ENCODE measurements at regions of chr3 and their contacts with region 1.

Region 1: DNA sequence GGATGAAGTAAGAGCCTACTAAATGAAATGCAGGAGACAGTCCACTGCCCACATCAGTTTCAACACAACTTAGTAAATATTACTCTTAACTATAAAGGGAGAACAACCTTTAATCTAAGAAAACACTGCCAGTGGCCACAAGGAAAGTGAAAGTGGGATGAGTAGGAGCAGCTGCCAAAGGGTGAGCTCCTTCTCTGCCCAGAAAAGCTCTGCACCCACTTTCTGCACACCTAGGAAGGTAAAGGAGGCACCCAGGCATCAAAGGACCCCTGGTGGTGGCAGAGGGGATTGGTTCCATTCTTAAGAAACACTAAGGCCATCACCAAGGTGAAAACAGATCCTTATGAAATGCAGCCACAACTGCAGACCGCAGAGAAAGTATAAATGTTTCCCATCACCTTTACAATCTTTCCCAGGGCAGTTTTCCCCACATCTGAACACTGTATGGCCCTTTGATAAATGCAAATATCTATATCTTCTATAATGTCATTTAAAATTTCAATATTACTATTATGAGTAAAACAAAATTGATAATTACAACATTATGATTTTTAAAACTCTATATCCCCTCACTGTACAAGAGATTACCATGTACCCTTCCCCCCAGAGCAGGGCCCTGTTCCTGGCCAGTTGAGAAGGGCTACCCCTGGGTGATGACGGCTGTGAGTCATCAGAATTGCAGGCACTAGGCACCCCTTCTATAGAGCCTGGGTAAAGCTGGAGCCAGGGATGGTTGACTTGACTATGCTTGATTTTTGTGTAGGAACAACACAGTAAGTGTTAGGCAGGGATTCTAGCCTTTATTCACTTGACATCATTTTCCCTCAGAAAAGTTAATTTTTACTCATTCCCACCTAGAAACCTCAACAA is 92.0 kb downstream of the SNRK start:
- DNase-seq: peak; percentile 80
- ATAC-seq: peak; percentile 97
- H3K4me3 Mint-ChIP-seq: no peak overlapping the region
- H3K27ac Mint-ChIP-seq: no peak overlapping the region
- H3K4me1 Mint-ChIP-seq: peaks cover 15% of the 10 kb centered on the region
- H3K27me3 Mint-ChIP-seq: no peaks in the 10 kb centered on the region

Region 2: DNA sequence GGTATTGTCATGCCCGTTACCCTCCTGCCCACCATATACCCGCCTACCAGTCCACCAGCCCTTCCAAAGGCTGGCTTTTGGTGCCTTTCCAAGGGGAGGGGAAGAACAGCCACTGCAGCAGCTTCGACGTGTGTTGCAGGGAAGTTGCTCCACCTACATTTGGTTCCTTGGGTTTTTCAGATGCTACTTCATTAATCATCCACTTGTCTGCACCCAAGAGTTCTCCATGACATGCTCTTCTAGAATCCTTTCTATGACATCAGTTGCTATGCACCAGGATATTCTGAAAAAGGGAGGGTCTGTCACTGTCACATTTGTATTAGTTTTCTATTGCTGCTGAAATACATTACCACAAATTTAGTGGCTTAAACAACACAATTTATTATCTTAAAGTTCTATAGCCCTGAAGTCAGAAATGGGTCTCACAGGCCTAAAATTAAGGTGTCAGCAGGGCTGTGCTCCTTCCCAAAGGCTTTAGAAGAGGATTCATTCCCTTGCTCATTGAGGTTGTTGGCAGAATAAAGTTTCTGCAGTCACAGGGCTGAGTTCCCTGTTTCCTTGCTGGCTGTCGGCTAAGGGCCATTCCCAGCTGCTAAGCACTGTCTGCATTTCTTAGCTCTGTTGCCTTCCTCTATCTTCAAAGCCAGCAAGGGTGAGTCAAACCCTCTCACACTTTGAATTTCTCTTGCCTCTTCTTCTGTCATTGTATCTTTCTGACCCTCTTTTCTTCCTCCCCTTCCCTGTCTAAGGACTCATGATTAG is 967.8 kb before region 1 on chr3 and contains the start of gene LYZL4:
- CTCF ChIA-PET with region 1: no interaction called
- POLR2A ChIA-PET with region 1: no interaction called
- intact Hi-C with region 1: no loop called
- DNase-seq: no peak
- ATAC-seq: no peak
- H3K4me3 Mint-ChIP-seq: no peak within 1 kb of the TSS
- H3K27ac Mint-ChIP-seq: no peak within 1 kb of the TSS
- H3K4me1 Mint-ChIP-seq: no peaks in the 10 kb centered on the region
- H3K27me3 Mint-ChIP-seq: peaks cover 5% of the 10 kb centered on the region
- total RNA-seq, gene LYZL4: not detected

Region 3: GRCh38 chr3:42961633-42962032 is 416.7 kb before region 1 on chr3:
- CTCF ChIA-PET with region 1: interaction called, 7 read pairs
- POLR2A ChIA-PET with region 1: no interaction called
- intact Hi-C with region 1: loop called (anchors 1 to 2 kb)
- DNase-seq: peak; percentile 31
- ATAC-seq: no peak
- H3K4me3 Mint-ChIP-seq: no peak overlapping the region
- H3K27ac Mint-ChIP-seq: no peak overlapping the region
- H3K4me1 Mint-ChIP-seq: peaks cover 22% of the 10 kb centered on the region
- H3K27me3 Mint-ChIP-seq: no peaks in the 10 kb centered on the region

Region 4: DNA sequence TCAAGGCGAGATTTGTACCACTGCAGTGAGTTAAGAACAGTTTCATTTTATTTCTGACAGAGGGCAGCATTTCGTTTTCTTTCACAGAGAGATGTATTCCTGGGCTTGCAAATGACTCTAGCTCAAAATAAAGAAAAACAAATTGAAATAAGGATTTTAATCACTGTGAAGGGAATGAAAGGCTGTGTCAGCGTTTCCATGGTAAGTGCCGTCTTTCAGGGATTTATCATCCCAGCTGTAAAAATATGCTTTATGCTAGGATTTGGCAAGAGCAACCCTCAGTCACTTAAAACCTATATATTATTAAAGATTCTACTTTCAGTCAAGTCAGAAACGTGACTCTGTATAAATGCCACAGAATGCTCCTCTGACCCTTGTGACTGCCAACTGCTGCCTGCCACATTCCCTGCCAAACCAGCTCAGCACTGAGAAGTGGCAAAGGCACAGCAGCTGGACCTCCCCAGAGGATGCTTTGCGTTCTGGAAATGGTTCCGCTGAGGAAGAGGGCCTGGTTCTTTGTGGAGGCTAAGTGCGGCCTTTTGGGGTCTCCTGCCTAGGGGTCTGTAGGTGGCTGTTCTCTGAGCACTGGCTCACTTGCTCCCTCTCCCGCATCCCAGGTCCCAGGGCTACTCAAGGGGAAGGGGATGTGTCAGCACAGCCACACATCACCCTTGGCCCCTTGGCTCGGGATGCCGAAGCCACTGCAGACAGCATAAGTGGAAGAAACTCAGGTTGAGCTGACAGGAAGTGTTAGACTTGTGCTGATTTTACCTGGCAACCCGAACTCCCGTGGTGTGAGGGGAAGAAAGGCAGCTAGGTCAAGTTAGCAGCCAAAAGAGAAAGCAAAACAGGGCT is 215.8 kb before region 1 on chr3:
- CTCF ChIA-PET with region 1: interaction called, 11 read pairs
- POLR2A ChIA-PET with region 1: no interaction called
- intact Hi-C with region 1: loop called (anchors 1 kb)
- DNase-seq: peak; percentile 57
- ATAC-seq: peak; percentile 84
- H3K4me3 Mint-ChIP-seq: peak overlapping the region; percentile 61
- H3K27ac Mint-ChIP-seq: peak overlapping the region; percentile 87
- H3K4me1 Mint-ChIP-seq: peaks cover 20% of the 10 kb centered on the region
- H3K27me3 Mint-ChIP-seq: no peaks in the 10 kb centered on the region

Region 5: GRCh38 chr3:43223670-43224364 is 154.5 kb before region 1 on chr3:
- CTCF ChIA-PET with region 1: interaction called, 9 read pairs
- POLR2A ChIA-PET with region 1: no interaction called
- intact Hi-C with region 1: loop called (anchors 1 kb)
- DNase-seq: no peak
- ATAC-seq: peak; percentile 23
- H3K4me3 Mint-ChIP-seq: no peak overlapping the region
- H3K27ac Mint-ChIP-seq: no peak overlapping the region
- H3K4me1 Mint-ChIP-seq: peaks cover 50% of the 10 kb centered on the region
- H3K27me3 Mint-ChIP-seq: no peaks in the 10 kb centered on the region

Region 6: DNA sequence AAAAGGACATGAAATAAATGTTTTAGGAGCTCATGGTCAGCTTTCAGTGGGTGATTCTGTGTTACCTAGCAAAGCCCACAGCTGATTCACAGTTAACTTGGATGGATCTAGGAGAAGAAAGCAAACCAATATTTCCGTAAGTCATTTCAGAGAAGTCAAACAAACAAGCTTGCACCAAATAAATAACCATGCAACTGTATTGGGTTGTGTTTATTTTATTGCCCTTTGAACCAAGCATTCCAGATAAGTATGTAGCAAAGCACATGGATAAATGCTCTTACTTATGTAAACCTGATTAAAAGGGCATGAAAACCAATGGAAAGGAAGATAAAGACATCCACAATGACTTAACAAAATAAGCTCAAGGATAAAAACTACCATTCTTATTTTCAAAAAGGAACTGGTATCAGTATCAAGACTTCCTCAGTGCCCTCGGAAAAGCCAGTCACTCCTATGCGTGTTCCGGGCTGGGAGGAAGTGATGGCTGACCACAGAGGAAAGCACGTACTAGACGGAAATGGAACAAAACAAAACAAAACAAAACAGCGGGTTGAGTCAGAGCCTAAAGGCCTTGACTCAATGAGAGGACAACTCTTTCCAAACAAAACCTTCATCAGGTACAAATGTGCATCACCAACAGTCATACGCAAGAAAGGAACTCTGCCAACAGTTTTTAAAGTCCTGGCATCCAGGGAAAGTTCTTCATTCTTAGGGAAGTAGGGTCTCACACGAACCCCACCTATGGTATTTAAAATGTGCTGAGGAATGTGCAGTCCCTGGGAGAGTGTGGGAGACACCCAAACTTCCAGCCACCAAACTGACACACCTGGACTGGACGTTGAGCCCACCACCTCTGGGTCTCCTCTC is 11.3 kb after region 1 on chr3:
- CTCF ChIA-PET with region 1: interaction called, 11 read pairs
- POLR2A ChIA-PET with region 1: no interaction called
- intact Hi-C with region 1: no loop called
- DNase-seq: peak; percentile 81
- ATAC-seq: peak; percentile 94
- H3K4me3 Mint-ChIP-seq: peak overlapping the region; percentile 7
- H3K27ac Mint-ChIP-seq: peak overlapping the region; percentile 77
- H3K4me1 Mint-ChIP-seq: peaks cover 47% of the 10 kb centered on the region
- H3K27me3 Mint-ChIP-seq: no peaks in the 10 kb centered on the region